Mammary epithelial cell (primary cell): ENCODE measurements at regions of chr12 and their contacts with region 1.

Region 1: DNA sequence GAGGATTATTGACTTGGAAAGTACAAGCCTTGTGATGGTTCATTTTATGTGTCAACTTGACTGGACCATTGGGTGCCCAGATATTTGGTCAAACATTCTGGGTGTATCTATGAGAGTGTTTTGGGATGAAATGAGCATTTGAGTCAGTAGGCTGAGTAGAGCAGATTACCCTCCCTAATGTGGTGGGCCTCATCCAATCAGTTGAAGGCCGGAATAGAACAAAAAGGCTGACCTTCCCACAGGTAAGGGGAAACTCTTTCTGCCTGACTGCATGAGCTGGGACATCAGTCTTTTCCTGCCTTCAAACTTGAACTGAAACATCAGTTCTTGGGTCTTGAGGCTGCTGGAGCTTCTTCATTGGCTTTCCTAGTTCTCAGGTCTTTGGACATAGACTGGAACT is 98.1 kb downstream of the ANO2 start:
- DNase-seq: no peak
- H3K4me3 ChIP-seq: no peak overlapping the region
- H3K27ac ChIP-seq: no peak overlapping the region
- H3K4me1 ChIP-seq: no peaks in the 10 kb centered on the region
- H3K27me3 ChIP-seq: no peaks in the 10 kb centered on the region
- CTCF ChIP-seq: no peak

Region 2: GRCh38 chr12:5473076-5473782 is 373.7 kb before region 1 on chr12:
- CTCF ChIA-PET with region 1: no interaction called
- dilution Hi-C with region 1: no loop called
- in situ Hi-C with region 1: no loop called
- intact Hi-C with region 1: no loop called
- DNase-seq: no peak
- H3K4me3 ChIP-seq: no peak overlapping the region
- H3K27ac ChIP-seq: no peak overlapping the region
- H3K4me1 ChIP-seq: no peaks in the 10 kb centered on the region
- H3K27me3 ChIP-seq: peaks cover 1% of the 10 kb centered on the region
- CTCF ChIP-seq: no peak

Region 3: GRCh38 chr12:5808981-5809380 is 38.0 kb before region 1 on chr12:
- CTCF ChIA-PET with region 1: no interaction called
- dilution Hi-C with region 1: loop called (anchors 5 kb)
- in situ Hi-C with region 1: no loop called
- intact Hi-C with region 1: no loop called
- DNase-seq: peak; percentile 13
- H3K4me3 ChIP-seq: no peak overlapping the region
- H3K27ac ChIP-seq: no peak overlapping the region
- H3K4me1 ChIP-seq: no peaks in the 10 kb centered on the region
- H3K27me3 ChIP-seq: no peaks in the 10 kb centered on the region
- CTCF ChIP-seq: no peak

Region 4: DNA sequence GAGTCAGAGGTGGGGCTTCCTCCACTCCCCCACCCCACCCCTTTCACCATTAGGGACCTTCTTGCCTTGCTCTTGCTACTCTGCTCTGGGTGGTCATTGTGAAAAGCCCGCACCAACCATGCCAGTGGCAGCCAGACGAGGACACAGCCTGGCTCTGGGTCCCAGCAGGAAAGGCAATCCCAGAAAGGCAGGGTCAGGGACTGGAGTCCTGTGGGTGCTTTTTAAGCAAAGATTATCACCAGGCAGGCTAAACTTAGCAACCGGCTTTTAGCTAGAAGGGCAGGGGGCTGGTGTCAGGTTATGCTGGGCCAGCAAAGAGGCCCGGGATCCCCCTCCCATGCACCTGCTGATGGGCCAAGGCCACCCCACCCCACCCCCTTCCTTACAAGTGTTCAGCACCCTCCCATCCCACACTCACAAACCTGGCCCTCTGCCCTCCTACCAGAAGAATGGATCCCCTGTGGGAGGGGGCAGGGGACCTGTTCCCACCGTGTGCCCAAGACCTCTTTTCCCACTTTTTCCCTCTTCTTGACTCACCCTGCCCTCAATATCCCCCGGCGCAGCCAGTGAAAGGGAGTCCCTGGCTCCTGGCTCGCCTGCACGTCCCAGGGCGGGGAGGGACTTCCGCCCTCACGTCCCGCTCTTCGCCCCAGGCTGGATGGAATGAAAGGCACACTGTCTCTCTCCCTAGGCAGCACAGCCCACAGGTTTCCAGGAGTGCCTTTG is 686.1 kb after region 1 on chr12:
- CTCF ChIA-PET with region 1: no interaction called
- dilution Hi-C with region 1: no loop called
- in situ Hi-C with region 1: no loop called
- intact Hi-C with region 1: no loop called
- DNase-seq: peak; percentile 87
- H3K4me3 ChIP-seq: peak overlapping the region; percentile 55 to 64 (median 60)
- H3K27ac ChIP-seq: peak overlapping the region; percentile 91
- H3K4me1 ChIP-seq: peaks cover 52% of the 10 kb centered on the region
- H3K27me3 ChIP-seq: no peaks in the 10 kb centered on the region
- CTCF ChIP-seq: no peak